Right ventricle myocardium inferior (tissue), 1 donor: ENCODE measurements at regions of chr9 and their contacts with region 1.

Region 1: GRCh38 chr9:5586391-5586802 is 42.5 kb upstream of the RIC1 start:
- DNase-seq: no peak
- ATAC-seq: no peak

Region 2: DNA sequence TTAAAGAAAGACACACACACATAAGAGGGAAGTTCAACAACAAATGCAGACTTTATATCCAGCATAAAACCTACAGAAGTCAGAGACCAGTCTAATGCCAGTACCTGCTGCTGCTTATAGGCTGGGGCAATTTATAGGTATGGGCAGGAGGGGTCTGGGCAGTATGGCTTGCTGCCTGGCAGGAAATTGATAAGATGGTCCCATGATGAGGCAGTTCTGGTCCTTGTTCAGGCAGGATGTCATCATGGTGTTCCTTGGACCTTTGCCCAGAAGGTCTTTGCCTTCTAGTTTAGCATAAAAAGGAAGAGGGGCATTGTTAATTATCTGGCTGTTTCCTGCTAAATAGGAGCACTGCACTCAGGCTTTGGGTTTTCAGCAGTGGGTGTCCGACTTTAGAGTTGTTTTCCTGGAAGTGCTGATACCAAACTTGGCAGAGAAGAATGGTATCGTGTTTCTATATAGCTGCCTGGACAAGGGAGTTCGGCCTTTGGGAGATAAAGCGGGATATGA is 86.5 kb before region 1 on chr9:
- intact Hi-C with region 1: loop called (anchors 5 kb)
- DNase-seq: no peak
- ATAC-seq: peak; percentile 32